ENCODE measurements at regions of chr3 and their contacts with region 1.

Region 1: GRCh38 chr3:135736740-135737139 is 228.8 kb upstream of the PPP2R3A start:
- DNase-seq: no peak
- ATAC-seq: no peak
- H3K4me3 ChIP-seq: no peak overlapping the region
- H3K27ac ChIP-seq: no peak overlapping the region
- H3K4me1 ChIP-seq: no peaks in the 10 kb centered on the region
- H3K27me3 ChIP-seq: no peaks in the 10 kb centered on the region
- CTCF ChIP-seq: no peak

Region 2: GRCh38 chr3:135473449-135473848 is 263.3 kb before region 1 on chr3:
- intact Hi-C with region 1: no loop called
- DNase-seq: no peak
- ATAC-seq: no peak
- H3K4me3 ChIP-seq: no peak overlapping the region
- H3K27ac ChIP-seq: no peak overlapping the region
- H3K4me1 ChIP-seq: no peaks in the 10 kb centered on the region
- H3K27me3 ChIP-seq: no peaks in the 10 kb centered on the region
- CTCF ChIP-seq: no peak

Region 3: GRCh38 chr3:135759651-135760050 is 22.9 kb after region 1 on chr3:
- intact Hi-C with region 1: loop called in 1 of 2 experiments (anchors 2 kb)
- DNase-seq: no peak
- ATAC-seq: no peak
- H3K4me3 ChIP-seq: no peak overlapping the region
- H3K27ac ChIP-seq: no peak overlapping the region
- H3K4me1 ChIP-seq: no peaks in the 10 kb centered on the region
- H3K27me3 ChIP-seq: no peaks in the 10 kb centered on the region
- CTCF ChIP-seq: no peak

Region 4: GRCh38 chr3:135779590-135780235 is 43.0 kb after region 1 on chr3:
- intact Hi-C with region 1: no loop called
- DNase-seq: no peak
- ATAC-seq: no peak
- H3K4me3 ChIP-seq: no peak overlapping the region
- H3K27ac ChIP-seq: no peak overlapping the region
- H3K4me1 ChIP-seq: no peaks in the 10 kb centered on the region
- H3K27me3 ChIP-seq: no peaks in the 10 kb centered on the region
- CTCF ChIP-seq: no peak